Activated CD4-positive, alpha-beta T cell treated with anti-CD3 and anti-CD28 coated beads for 36 hours (primary cell): ENCODE measurements at regions of chr15 and their contacts with region 1.

Region 1: DNA sequence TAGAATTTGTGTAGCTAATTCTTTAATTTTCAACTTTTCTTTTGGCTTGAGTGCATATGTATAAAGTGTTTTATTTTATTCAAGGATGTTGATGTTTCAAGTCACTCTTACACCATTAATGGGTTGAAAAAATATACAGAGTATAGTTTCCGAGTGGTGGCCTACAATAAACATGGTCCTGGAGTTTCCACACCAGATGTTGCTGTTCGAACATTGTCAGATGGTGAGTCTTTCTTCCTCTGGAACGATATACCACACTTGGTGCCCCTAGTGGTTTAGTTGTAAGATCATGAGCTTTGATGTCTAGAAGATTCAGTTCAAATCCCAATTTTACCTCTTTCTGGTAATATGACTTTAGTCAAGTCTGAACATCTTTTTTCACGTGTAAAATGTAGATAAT is 119.3 kb downstream of the HCN4 start:
- DNase-seq: no peak
- ATAC-seq: no peak
- H3K4me3 Mint-ChIP-seq: no peak overlapping the region
- H3K27ac Mint-ChIP-seq: no peak overlapping the region
- H3K4me1 Mint-ChIP-seq: peaks cover 3% of the 10 kb centered on the region
- H3K27me3 Mint-ChIP-seq: no peaks in the 10 kb centered on the region

Region 2: GRCh38 chr15:73265536-73266153 is 16.1 kb after region 1 on chr15:
- CTCF ChIA-PET with region 1: interaction called, 83 read pairs
- POLR2A ChIA-PET with region 1: no interaction called
- intact Hi-C with region 1: no loop called
- DNase-seq: peak; percentile 72
- ATAC-seq: peak; percentile 87
- H3K4me3 Mint-ChIP-seq: no peak overlapping the region
- H3K27ac Mint-ChIP-seq: no peak overlapping the region
- H3K4me1 Mint-ChIP-seq: peaks cover 3% of the 10 kb centered on the region
- H3K27me3 Mint-ChIP-seq: no peaks in the 10 kb centered on the region

Region 3: GRCh38 chr15:73273181-73274002 is 23.9 kb after region 1 on chr15:
- CTCF ChIA-PET with region 1: interaction called, 83 read pairs
- POLR2A ChIA-PET with region 1: no interaction called
- intact Hi-C with region 1: no loop called
- DNase-seq: peak; percentile 64
- ATAC-seq: peak; percentile 90
- H3K4me3 Mint-ChIP-seq: no peak overlapping the region
- H3K27ac Mint-ChIP-seq: no peak overlapping the region
- H3K4me1 Mint-ChIP-seq: peaks cover 4% of the 10 kb centered on the region
- H3K27me3 Mint-ChIP-seq: no peaks in the 10 kb centered on the region